ENCODE measurements at regions of chr17 and their contacts with region 1.

Region 1: DNA sequence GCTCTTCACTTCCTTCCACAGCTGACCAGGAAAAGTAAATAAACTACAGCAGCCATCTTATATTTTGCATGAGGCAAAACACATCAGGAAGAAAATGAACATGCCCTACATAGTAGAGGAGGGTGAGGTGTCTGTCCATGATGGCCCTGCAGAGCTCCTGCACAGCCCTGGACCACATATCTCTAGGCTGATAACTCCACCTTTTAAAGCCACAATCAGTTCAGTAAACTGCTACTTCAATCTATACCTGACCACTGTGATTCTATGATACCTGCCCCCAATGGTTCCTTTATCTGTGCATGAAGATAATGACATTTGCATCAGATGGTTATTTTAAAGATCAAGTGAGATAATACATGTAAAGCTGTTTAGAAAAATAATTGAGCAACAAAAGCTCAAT is 82.2 kb downstream of the HELZ start:
- DNase-seq: no peak
- ATAC-seq: no peak
- H3K4me3 ChIP-seq: no peak overlapping the region
- H3K27ac ChIP-seq: no peak overlapping the region
- H3K4me1 ChIP-seq: no peaks in the 10 kb centered on the region
- H3K27me3 ChIP-seq: no peaks in the 10 kb centered on the region
- CTCF ChIP-seq: no peak

Region 2: DNA sequence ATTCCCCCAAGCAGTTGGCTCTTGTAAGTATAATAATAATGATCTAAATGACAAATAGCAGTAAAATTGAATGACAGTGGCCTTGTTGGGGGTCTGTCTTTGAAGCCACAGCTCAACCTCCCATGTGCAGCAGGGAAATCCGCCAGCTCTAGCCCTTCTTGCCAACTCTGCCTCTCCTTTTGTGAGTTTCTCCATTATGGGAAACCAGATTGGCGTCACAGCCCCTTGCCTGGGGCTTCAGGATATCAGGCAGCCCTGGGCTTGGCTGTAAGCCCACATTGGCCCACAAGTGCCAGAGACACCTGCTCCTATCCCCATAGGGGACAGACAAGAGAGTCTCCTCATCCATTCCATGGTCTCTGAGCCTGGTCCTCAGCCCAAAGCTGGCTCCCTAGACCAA is 398.2 kb before region 1 on chr17:
- CTCF ChIA-PET with region 1: interaction called, 14 read pairs
- POLR2A ChIA-PET with region 1: no interaction called
- in situ Hi-C with region 1: no loop called
- intact Hi-C with region 1: no loop called
- DNase-seq: no peak
- ATAC-seq: no peak
- H3K4me3 ChIP-seq: no peak overlapping the region
- H3K27ac ChIP-seq: no peak overlapping the region
- H3K4me1 ChIP-seq: no peaks in the 10 kb centered on the region
- H3K27me3 ChIP-seq: no peaks in the 10 kb centered on the region
- CTCF ChIP-seq: no peak